Thyroid gland (tissue), 4 donors: ENCODE measurements at regions of chr1 and their contacts with region 1.

Region 1: DNA sequence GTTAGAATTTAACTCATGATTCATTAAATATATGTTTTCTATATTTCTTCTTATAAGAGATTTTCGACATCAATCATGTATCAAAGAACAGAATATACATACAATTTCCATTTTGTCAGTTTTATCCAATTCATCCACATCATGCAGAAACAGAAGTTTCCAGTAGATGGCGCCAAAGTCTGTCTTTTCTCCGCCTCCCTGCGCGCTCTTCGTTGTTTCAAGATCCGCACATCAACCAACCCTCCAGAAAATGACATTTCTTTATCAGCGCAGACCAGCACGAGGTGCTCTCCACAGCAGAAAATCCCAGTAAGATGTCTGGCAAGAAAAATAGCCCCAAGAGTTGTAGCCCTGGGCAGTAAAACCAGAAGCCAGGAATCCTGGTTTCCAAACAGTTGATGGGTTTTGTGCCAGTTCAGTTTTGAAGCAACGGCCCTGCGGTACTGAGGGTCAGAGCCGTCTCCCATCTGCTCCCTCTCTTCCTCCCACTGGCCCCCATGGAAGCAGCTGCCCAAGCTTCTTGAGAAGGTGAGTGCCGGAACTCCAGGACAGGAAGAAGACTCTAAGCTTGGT is 38.6 kb upstream of the GPR137B start:
- DNase-seq: peak; percentile 37 to 48
- H3K4me3 ChIP-seq: no peak overlapping the region
- H3K27ac ChIP-seq: no peak overlapping the region
- H3K4me1 ChIP-seq: no peaks in the 10 kb centered on the region
- H3K27me3 ChIP-seq: no peaks in the 10 kb centered on the region
- CTCF ChIP-seq: peak; percentile 67 to 84 (median 77)
- POLR2A ChIP-seq: no peak

Region 2: GRCh38 chr1:236489710-236490377 is 386.1 kb after region 1 on chr1:
- intact Hi-C with region 1: loop called (anchors 5 kb)
- DNase-seq: peak in 1 of 2 donors; percentile 32
- H3K4me3 ChIP-seq: no peak overlapping the region
- H3K27ac ChIP-seq: no peak overlapping the region
- H3K4me1 ChIP-seq: peaks cover 0 to 3% of the 10 kb centered on the region in 2 donors
- H3K27me3 ChIP-seq: no peaks in the 10 kb centered on the region
- CTCF ChIP-seq: peak in 5 of 6 experiments; percentile 55 to 66 (median 57)
- POLR2A ChIP-seq: no peak

Region 3: DNA sequence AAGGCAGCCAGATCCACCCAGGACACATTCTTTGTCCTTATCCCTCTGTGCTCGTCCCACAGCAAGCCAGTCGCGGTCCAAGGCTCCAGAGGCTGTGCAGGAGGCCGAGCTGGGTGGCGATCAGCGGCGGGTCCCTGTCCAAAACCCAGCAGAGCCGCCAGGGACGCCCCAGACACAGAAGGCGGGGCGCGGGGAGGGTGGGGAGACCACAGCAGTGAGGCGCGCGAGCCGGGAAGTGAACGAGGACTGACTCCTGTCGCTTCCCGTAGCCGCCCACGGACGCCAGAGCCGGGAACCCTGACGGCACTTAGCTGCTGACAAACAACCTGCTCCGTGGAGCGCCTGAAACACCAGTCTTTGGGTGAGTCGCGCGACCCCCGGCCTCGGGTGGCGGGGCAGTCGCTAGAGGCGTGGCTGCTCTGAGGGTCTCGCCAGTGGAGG is 420.0 kb after region 1 on chr1 and contains the start of gene LGALS8:
- intact Hi-C with region 1: loop called (anchors 10 kb)
- DNase-seq: peak; percentile 90 to 94
- H3K4me3 ChIP-seq: peak within 1 kb of the TSS; percentile 49 to 95 (median 63)
- H3K27ac ChIP-seq: peak within 1 kb of the TSS; percentile 52 to 94 (median 75)
- H3K4me1 ChIP-seq: peaks cover 6 to 15% of the 10 kb centered on the region in 2 donors
- H3K27me3 ChIP-seq: no peaks in the 10 kb centered on the region
- CTCF ChIP-seq: peak in 1 of 6 experiments; percentile 8
- POLR2A ChIP-seq: peak; percentile 23 to 59
- total RNA-seq, gene LGALS8: 61.8 to 94.2 (median 79.2) TPM

Region 4: DNA sequence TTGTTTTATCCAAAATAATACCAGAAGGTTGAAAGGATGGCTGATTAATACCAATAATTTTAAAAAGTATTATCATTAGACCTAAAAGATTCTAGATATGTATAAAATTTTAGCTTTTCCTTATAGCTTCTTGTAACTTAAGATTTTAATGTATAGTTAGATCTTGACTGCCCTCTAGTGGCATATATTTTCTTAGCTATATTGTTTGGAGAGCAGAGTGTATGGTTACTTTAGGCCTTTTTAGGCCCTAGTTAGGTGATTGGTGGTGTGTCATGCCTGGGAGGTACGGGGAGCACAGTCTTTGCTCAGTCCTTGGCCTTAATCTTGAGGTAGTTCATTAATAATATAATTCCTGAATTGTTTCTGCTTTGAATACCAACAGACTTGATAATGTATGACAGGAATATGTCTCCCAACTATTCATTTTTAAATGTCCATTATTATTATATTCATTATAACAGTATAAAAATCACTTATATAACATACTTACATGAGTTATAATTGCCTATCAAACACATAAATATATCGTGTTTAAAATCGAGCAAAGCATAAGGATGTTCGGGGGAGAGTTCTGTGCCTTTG is 1458.6 kb after region 1 on chr1:
- intact Hi-C with region 1: loop called (anchors 10 kb)
- DNase-seq: no peak
- H3K4me3 ChIP-seq: no peak overlapping the region
- H3K27ac ChIP-seq: no peak overlapping the region
- H3K4me1 ChIP-seq: no peaks in the 10 kb centered on the region
- H3K27me3 ChIP-seq: no peaks in the 10 kb centered on the region
- CTCF ChIP-seq: peak; percentile 19 to 65 (median 48)
- POLR2A ChIP-seq: no peak